Dendritic cell treated with granulocyte-macrophage colony-stimulating factor and Interleukin-4, amounts not matched to agents 40 ng/mL and 50 ng/mL, for 4 days (primary cell): ENCODE measurements at regions of chr6 and their contacts with region 1.

Region 1: DNA sequence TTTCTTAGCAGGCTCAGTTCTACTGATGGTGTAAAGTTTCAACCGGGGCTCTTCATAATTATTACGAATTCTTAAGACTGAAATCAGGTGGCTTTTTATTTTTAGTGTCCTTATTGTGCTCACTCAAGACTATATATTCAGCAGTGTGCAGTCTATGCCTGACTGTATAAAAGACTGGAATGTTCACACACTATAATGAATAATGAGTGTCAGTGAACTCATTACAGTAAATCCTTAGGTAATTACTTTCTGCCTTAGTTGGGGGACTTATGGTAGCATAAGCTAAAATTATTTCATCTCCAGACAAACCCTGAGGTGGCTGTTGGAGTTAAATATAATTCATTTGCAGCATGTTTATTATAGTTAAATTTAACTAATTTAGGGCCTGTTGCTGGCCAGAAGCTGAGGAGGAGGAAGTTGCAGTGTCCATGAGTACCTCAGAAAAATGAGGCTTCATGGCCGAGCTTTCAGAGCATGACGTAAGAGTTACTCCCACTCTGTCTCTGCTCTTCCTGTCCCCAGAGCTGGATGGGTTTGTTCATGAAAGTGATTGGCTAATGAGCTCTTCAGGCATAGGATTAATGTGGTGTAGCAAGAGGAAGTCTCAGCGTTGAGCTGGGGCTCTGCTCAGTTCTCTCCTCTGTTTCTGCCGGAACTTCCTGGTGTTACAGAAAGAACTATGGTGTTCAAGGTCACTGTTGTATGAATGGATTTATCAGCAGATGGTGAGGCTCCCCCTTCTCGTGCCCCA is 335.7 kb downstream of the NRN1 start:
- H3K4me3 Mint-ChIP-seq: no peak overlapping the region
- H3K27ac Mint-ChIP-seq: peak overlapping the region; percentile 91
- H3K4me1 Mint-ChIP-seq: peaks cover 46% of the 10 kb centered on the region
- H3K27me3 Mint-ChIP-seq: no peaks in the 10 kb centered on the region

Region 2: DNA sequence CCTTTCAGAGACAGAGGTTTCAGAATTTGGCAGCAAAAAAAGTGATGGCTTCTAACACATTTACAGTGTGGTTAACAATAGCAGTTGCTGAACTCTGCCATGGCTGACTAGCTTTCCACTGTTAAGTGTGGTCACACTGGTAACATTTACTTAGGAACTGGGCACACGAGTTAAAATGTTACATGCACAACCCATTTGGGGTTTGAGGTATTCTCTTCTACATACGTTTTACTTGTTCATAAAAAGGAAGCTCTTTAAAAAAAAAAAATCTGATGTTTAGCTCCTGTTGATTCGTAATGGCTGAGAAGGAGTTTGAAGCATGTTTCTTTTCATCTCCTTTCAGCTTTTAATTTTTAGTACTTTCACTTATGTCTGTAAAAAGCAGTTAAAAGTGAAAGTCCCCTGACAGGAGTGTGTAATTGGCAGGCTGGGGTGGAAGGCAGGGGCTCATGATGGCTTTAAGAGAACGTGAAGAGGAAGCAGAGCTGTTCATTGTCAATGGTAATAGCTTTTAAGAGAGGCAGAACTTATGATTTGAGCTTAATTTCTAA is 163.8 kb before region 1 on chr6:
- intact Hi-C with region 1: no loop called
- H3K4me3 Mint-ChIP-seq: no peak overlapping the region
- H3K27ac Mint-ChIP-seq: no peak overlapping the region
- H3K4me1 Mint-ChIP-seq: no peaks in the 10 kb centered on the region
- H3K27me3 Mint-ChIP-seq: no peaks in the 10 kb centered on the region

Region 3: GRCh38 chr6:5657684-5658430 is 13.1 kb before region 1 on chr6:
- intact Hi-C with region 1: loop called (anchors 1 kb)
- H3K4me3 Mint-ChIP-seq: peak overlapping the region; percentile 21
- H3K27ac Mint-ChIP-seq: peak overlapping the region; percentile 91
- H3K4me1 Mint-ChIP-seq: peaks cover 27% of the 10 kb centered on the region
- H3K27me3 Mint-ChIP-seq: no peaks in the 10 kb centered on the region

Region 4: GRCh38 chr6:5723841-5724691 is 53.1 kb after region 1 on chr6:
- intact Hi-C with region 1: loop called (anchors 2 kb)
- H3K4me3 Mint-ChIP-seq: peak overlapping the region; percentile 71
- H3K27ac Mint-ChIP-seq: peak overlapping the region; percentile 98
- H3K4me1 Mint-ChIP-seq: peaks cover 47% of the 10 kb centered on the region
- H3K27me3 Mint-ChIP-seq: no peaks in the 10 kb centered on the region

Region 5: GRCh38 chr6:5995949-5996713 is 325.1 kb after region 1 on chr6:
- intact Hi-C with region 1: loop called (anchors 10 kb)
- H3K4me3 Mint-ChIP-seq: peak overlapping the region; percentile 91
- H3K27ac Mint-ChIP-seq: peak overlapping the region; percentile 86
- H3K4me1 Mint-ChIP-seq: peaks cover 77% of the 10 kb centered on the region
- H3K27me3 Mint-ChIP-seq: peaks cover 92% of the 10 kb centered on the region